AG04450 (cell line): ENCODE measurements at regions of chr13 and their contacts with region 1.

Region 1: GRCh38 chr13:52617070-52618060 is 24.9 kb upstream of the HNRNPA1L2 start:
- DNase-seq: peak; percentile 53
- H3K4me3 ChIP-seq: peak overlapping the region; percentile 89
- H3K27ac ChIP-seq: peak overlapping the region; percentile 47
- H3K27me3 ChIP-seq: no peaks in the 10 kb centered on the region
- CTCF ChIP-seq: no peak

Region 2: GRCh38 chr13:52187029-52187423 is 430.3 kb before region 1 on chr13:
- CTCF ChIA-PET with region 1: no interaction called
- POLR2A ChIA-PET with region 1: no interaction called
- DNase-seq: no peak
- H3K4me3 ChIP-seq: no peak overlapping the region
- H3K27ac ChIP-seq: no peak overlapping the region
- H3K27me3 ChIP-seq: no peaks in the 10 kb centered on the region
- CTCF ChIP-seq: no peak

Region 3: GRCh38 chr13:52652196-52652979 is 35.0 kb after region 1 on chr13 and contains the start of gene SUGT1:
- CTCF ChIA-PET with region 1: interaction called, 3 read pairs
- POLR2A ChIA-PET with region 1: interaction called, 26 read pairs
- DNase-seq: peak; percentile 93
- H3K4me3 ChIP-seq: peak within 1 kb of the TSS; percentile 98
- H3K27ac ChIP-seq: peak within 1 kb of the TSS; percentile 100
- H3K27me3 ChIP-seq: no peaks in the 10 kb centered on the region
- CTCF ChIP-seq: peak; percentile 73
- polyA plus RNA-seq, gene SUGT1: 44.9 and 64.8 TPM in 2 replicates